ENCODE measurements at regions of chr22 and their contacts with region 1.

Region 1: GRCh38 chr22:28002181-28002700 is 83.2 kb upstream of the PITPNB start:
- DNase-seq: peak; percentile 54

Region 2: GRCh38 chr22:27919222-27919941 is 82.9 kb before region 1 on chr22 and contains the start of gene PITPNB:
- in situ Hi-C with region 1: loop called (anchors 5 kb)
- DNase-seq: peak; percentile 96
- total RNA-seq, gene PITPNB: 10.0 and 29.5 TPM in 2 replicates

Region 3: DNA sequence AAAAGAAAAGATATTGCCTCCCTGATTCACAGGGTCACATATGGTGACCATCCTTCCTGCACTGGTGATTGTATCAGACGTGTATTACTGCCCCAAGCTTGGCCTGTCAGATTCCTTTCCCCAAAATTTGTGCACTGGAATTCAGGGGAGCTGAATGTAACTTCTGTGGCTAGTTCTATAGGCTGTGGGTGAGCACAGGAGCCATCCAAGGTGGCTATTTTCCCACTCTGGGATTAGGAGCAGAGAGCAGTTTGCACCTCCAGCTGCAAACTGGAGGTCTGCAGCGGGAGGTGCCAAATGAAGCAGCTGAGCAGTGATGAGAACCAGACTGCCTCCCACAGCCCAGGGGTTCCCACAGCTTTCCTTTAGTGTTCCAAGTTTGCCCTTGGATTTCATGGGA is 41.0 kb after region 1 on chr22:
- in situ Hi-C with region 1: no loop called
- DNase-seq: no peak

Measured in G401 (cell line).